PC-9 (cell line): ENCODE measurements at regions of chr9 and their contacts with region 1.

Region 1: DNA sequence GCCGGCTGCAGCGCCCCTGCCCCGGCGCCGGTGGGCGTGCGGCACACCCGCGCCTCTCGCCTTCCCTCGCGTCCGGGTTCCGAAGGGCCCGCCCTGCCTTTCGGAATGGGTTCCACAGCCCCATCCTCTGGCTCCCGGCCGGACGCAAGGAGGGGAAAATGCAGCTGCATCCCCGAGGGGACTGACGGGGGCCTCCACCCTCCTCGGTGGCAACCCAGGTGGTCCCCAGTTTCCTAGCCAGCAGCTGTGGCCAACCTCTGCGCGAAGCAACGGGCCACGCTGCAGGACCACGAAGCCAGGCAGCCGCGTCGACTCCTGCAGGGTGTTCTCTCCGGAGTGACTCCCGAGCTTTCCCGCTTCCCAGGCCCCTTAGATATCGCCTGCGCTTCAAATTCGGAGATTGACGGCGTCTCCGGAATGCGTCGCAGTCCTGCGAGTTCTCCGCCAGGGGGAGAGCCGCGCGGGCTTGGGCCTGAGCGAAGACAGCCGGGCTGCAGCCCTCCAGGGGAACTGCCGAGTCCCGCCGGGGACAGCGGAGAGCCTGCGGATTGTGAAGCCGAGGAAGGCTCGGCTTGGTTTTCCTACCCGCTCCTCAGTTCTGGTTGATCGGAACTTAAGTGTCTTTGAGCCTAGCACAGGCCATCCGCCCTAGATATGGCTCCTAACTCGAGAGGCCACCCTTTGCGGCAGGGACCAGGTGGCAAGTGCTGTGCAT is 582 bp upstream of the APBA1 start:
- DNase-seq: peak; percentile 73 to 80
- H3K4me3 ChIP-seq: peak overlapping the region; percentile 76
- H3K27ac ChIP-seq: no peak overlapping the region
- H3K4me1 ChIP-seq: peaks cover 32% of the 10 kb centered on the region
- H3K27me3 ChIP-seq: no peaks in the 10 kb centered on the region
- CTCF ChIP-seq: peak; percentile 84

Region 2: GRCh38 chr9:69549310-69550202 is 123.2 kb before region 1 on chr9:
- CTCF ChIA-PET with region 1: no interaction called
- POLR2A ChIA-PET with region 1: no interaction called
- intact Hi-C with region 1: loop called (anchors 1 kb)
- DNase-seq: peak; percentile 29 to 40
- H3K4me3 ChIP-seq: no peak overlapping the region
- H3K27ac ChIP-seq: no peak overlapping the region
- H3K4me1 ChIP-seq: no peaks in the 10 kb centered on the region
- H3K27me3 ChIP-seq: 0 out of 2 replicates have a peak, but pooled peaks cover 4% of the 10 kb centered on the region
- CTCF ChIP-seq: peak; percentile 96

Region 3: DNA sequence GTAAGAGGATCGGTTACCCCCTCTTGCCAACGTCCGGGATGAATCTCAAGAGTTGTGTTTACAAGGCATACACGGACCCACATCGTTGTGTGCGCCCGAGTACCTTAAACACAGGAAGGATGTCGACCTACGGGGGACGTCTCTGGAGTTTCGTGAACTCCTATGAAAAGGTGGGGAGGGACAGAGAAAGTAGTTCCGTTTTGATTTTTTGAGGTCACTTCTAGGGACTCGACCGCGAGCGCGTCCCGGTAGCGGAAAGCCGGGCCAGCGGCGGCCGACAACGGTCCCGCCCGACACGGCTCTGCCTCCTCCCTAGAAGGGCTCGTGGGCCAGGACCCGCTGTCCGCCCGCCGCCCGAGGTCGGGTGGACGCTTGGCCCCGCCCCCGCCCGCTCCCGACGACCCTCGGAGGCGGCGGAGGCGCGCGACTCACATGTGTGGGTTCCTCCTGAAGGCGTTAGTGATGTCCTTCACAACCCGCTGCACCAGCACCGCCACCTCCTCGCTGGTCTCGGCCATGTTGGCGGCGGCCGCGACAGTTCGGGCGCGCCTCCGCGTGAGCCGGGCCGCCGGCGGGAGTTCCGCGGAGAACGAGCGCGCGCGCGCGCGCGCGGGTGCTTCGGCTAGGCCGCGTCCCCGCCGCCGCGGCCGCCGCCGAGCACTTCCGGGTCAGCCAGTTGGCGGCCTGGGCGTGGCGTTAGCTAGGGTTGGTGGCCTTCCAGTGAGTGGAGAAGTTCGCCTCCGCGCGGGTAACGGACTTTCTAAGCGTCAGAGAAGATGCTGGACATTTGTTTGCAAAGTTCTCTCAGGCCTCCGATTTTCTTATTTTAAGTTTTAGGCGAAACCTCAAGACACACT is 86.9 kb after region 1 on chr9 and contains the start of gene PTAR1:
- CTCF ChIA-PET with region 1: no interaction called
- POLR2A ChIA-PET with region 1: interaction called, 6 read pairs
- intact Hi-C with region 1: loop called (anchors 2 kb)
- DNase-seq: peak; percentile 61 to 92
- H3K4me3 ChIP-seq: peak within 1 kb of the TSS; percentile 67
- H3K27ac ChIP-seq: peak within 1 kb of the TSS; percentile 71
- H3K4me1 ChIP-seq: peaks cover 15% of the 10 kb centered on the region
- H3K27me3 ChIP-seq: no peaks in the 10 kb centered on the region
- CTCF ChIP-seq: no peak
- total RNA-seq, gene PTAR1: 44.9 and 47.3 TPM in 2 replicates

Region 4: DNA sequence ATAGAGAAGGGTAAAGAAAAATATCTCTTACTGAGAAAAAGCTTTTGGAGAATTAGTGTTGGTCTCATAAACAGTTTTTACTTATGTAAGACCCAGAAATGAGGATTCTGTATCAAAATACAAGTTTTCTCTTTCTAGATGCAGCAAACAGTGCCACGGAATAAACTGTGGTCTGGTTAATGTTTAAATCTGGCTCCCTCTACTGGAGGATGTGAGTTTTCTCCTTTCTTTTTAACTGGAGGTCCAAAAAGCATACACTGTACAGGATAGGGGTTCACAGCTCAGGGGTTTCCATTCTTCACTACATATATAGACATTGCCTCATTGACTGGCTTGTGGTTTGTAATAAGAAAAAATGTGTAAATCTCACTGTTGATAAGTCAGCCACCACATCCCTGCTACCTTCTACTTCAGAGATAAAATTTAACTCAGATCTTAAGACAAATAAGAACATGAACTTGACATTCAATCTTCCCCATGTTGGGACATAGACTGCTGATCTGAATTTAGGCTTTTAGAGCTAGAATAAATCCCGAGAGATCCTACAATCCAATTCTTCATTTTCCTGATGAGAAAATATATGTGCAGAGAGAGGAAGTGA is 246.8 kb after region 1 on chr9:
- CTCF ChIA-PET with region 1: interaction called, 3 read pairs
- POLR2A ChIA-PET with region 1: no interaction called
- intact Hi-C with region 1: loop called (anchors 2 kb)
- DNase-seq: peak; percentile 8 to 54
- H3K4me3 ChIP-seq: no peak overlapping the region
- H3K27ac ChIP-seq: no peak overlapping the region
- H3K4me1 ChIP-seq: 0 out of 2 replicates have a peak, but pooled peaks cover 3% of the 10 kb centered on the region
- H3K27me3 ChIP-seq: no peaks in the 10 kb centered on the region
- CTCF ChIP-seq: peak; percentile 81

Region 5: GRCh38 chr9:70258692-70259511 is 586.1 kb after region 1 on chr9 and contains the start of gene SMC5:
- CTCF ChIA-PET with region 1: no interaction called
- POLR2A ChIA-PET with region 1: no interaction called
- intact Hi-C with region 1: loop called (anchors 10 kb)
- DNase-seq: peak; percentile 72 to 95
- H3K4me3 ChIP-seq: peak within 1 kb of the TSS; percentile 75
- H3K27ac ChIP-seq: peak within 1 kb of the TSS; percentile 89
- H3K4me1 ChIP-seq: peaks cover 68% of the 10 kb centered on the region
- H3K27me3 ChIP-seq: no peaks in the 10 kb centered on the region
- CTCF ChIP-seq: no peak
- total RNA-seq, gene SMC5: 34.4 and 41.9 TPM in 2 replicates